H1 (cell line): ENCODE measurements at regions of chr6 and their contacts with region 1.

Region 1: GRCh38 chr6:131949909-131950766 is 1.0 kb downstream of the CCN2 start:
- DNase-seq: peak in 1 of 2 experiments; percentile 81
- H3K4me3 ChIP-seq: peak overlapping the region; percentile 72 to 98 (median 90)
- H3K27ac ChIP-seq: peak overlapping the region; percentile 84; the same call in 1 of the 2 replicates
- H3K4me1 ChIP-seq: peaks cover 15 to 33% (median 21%) of the 10 kb centered on the region in 4 experiments
- H3K27me3 ChIP-seq: no peaks in the 10 kb centered on the region
- CTCF ChIP-seq: peak; percentile 68 to 80 (median 71)
- EP300 ChIP-seq: no peak
- POLR2A ChIP-seq: peak; percentile 17 to 62
- RAD21 ChIP-seq: peak; percentile 56 to 58

Region 2: GRCh38 chr6:130259557-130259956 is 1690.6 kb before region 1 on chr6:
- CTCF ChIA-PET with region 1: no interaction called
- POLR2A ChIA-PET with region 1: no interaction called
- DNase-seq: no peak
- H3K4me3 ChIP-seq: no peak overlapping the region
- H3K27ac ChIP-seq: no peak overlapping the region
- H3K4me1 ChIP-seq: no peaks in the 10 kb centered on the region
- H3K27me3 ChIP-seq: no peaks in the 10 kb centered on the region
- CTCF ChIP-seq: no peak
- EP300 ChIP-seq: no peak
- POLR2A ChIP-seq: no peak
- RAD21 ChIP-seq: no peak

Region 3: GRCh38 chr6:131914967-131915751 is 35.0 kb before region 1 on chr6:
- CTCF ChIA-PET with region 1: interaction called, 3 read pairs
- POLR2A ChIA-PET with region 1: interaction called, 12 read pairs
- DNase-seq: no peak
- H3K4me3 ChIP-seq: no peak overlapping the region
- H3K27ac ChIP-seq: no peak overlapping the region
- H3K4me1 ChIP-seq: no peaks in the 10 kb centered on the region
- H3K27me3 ChIP-seq: no peaks in the 10 kb centered on the region
- CTCF ChIP-seq: peak in 2 of 3 experiments; percentile 48 to 71; a peak in 3 of 4 replicates
- EP300 ChIP-seq: no peak
- POLR2A ChIP-seq: peak; percentile 19 to 84; a peak in 2 of 3 replicates
- RAD21 ChIP-seq: peak; percentile 49 to 64

Region 4: DNA sequence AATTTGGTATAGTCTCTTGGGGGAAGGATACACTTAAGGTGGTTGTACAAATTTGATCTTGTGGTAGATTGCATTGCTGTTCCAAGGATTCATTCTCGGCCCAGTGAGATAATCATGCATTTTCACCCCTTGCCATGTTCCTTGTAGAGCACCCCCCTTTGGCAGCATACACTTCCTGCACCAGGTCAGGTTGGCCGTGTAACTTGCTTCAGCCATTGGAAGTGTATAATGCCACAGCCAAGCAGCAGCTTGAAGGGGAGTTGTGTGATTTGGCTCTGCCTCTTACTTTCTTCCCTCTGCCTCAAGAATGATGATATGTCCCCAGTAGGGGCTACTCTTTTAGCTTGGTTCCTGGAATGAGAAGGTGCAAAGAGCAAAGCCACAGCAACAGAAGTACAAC is 20.9 kb before region 1 on chr6:
- CTCF ChIA-PET with region 1: interaction called, 36 read pairs
- POLR2A ChIA-PET with region 1: interaction called, 216 read pairs
- DNase-seq: no peak
- H3K4me3 ChIP-seq: no peak overlapping the region
- H3K27ac ChIP-seq: no peak overlapping the region
- H3K4me1 ChIP-seq: 0 out of 7 replicates have a peak, but pooled peaks cover 0 to 2% (median 0%) of the 10 kb centered on the region in 4 experiments
- H3K27me3 ChIP-seq: no peaks in the 10 kb centered on the region
- CTCF ChIP-seq: peak; percentile 60 to 77 (median 72)
- EP300 ChIP-seq: no peak
- POLR2A ChIP-seq: no peak
- RAD21 ChIP-seq: peak in 1 of 2 experiments; percentile 35; a peak in 2 of 4 replicates

Region 5: DNA sequence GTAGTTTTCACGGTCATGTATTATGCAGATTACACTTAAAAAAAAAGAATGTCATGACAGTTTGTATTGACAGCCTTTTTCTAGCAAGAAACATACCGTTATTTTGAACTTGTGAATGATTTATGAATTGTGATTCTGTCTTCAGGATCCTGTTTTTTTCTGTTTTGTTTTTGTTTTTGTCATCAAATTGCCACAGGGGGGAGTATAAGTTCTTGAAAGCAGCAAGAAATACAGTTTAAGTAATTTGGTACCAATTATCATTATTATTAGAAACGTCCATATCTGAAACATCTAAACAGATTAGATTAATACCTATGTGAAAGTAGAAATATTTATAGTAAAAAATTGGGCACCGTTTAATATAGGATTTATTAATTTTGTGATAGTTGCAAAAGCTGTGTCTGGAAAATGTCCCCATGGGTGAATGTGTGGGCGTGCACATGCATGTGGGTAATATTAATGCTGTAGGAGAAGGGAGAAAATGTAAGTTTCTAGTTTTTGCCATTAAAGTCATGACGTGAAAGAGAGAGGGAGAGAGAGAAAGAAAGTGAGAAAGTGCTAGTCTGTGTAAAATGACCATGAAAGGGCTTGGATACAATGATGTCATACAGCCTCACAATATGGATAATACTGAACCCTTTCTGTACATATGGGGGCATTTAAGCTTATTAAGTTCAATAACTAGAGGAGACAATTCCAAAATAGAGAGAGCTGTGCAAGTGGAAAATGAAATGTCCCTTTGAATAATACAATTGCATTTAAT is 10.4 kb after region 1 on chr6:
- CTCF ChIA-PET with region 1: interaction called, 5 read pairs
- POLR2A ChIA-PET with region 1: interaction called, 70 read pairs
- DNase-seq: no peak
- H3K4me3 ChIP-seq: no peak overlapping the region
- H3K27ac ChIP-seq: no peak overlapping the region
- H3K4me1 ChIP-seq: peaks cover 0 to under 1% (median under 1%) of the 10 kb centered on the region in 4 experiments; a peak in 4 of 7 replicates
- H3K27me3 ChIP-seq: no peaks in the 10 kb centered on the region
- CTCF ChIP-seq: no peak
- EP300 ChIP-seq: no peak
- POLR2A ChIP-seq: no peak
- RAD21 ChIP-seq: peak in 1 of 2 experiments; percentile 25; a peak in 2 of 4 replicates

Region 6: DNA sequence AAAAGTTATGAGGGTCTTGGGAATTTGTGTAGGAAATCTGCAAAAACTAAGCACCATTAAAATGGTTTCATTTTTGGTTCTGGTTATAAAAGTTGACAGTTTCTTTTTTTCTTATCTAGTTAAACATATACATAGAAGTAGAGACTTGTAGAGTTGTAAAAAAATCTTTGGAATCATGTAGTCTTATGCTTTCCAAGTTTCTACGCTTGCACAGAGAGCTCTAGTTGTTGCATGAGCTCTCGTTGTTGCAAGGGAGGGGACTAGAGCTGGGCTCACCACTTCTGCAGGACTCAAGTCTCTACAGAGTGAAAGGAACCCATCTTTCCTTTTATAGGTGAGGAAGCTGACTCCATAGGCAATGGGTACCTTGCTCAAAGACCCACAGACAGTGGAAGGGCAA is 22.6 kb after region 1 on chr6:
- CTCF ChIA-PET with region 1: no interaction called
- POLR2A ChIA-PET with region 1: interaction called, 20 read pairs
- DNase-seq: no peak
- H3K4me3 ChIP-seq: no peak overlapping the region
- H3K27ac ChIP-seq: no peak overlapping the region
- H3K4me1 ChIP-seq: no peaks in the 10 kb centered on the region
- H3K27me3 ChIP-seq: peaks cover 0 to 1% (median 0%) of the 10 kb centered on the region in 4 experiments; a peak in 1 of 7 replicates
- CTCF ChIP-seq: no peak
- EP300 ChIP-seq: no peak
- POLR2A ChIP-seq: no peak
- RAD21 ChIP-seq: no peak

Region 7: DNA sequence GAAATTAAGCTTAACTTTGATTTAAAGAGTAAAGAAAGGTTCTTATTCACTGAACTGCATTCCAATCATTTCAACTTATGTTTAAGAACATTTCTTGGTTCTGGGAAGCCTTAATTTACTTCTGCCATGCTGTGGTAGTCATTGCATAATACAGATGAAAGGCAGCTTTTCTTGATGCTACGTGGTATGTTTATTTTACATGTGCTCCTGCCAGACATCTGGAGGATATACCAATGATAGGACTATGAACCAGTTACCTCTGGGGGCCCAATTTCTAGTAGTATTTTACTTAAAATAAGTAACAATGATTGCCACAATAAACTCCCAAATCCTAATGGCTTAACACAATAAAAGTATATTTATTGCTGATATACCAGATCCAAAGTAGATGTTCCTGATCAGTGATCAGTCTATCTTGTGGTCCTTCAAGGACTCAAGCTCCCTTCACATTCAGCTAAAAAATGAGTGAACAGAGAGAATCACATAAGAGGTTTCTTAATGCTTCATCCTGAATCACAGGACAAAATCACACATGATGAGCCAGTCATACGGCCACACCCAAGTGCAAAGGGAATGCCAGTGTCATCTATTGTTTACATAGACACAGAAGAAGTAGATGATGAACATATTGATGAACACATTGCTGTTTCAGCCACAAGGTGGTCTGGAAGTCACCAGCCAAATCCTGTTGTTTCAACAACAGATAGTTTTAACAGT is 57.5 kb after region 1 on chr6:
- CTCF ChIA-PET with region 1: interaction called, 3 read pairs
- POLR2A ChIA-PET with region 1: interaction called, 11 read pairs
- DNase-seq: no peak
- H3K4me3 ChIP-seq: no peak overlapping the region
- H3K27ac ChIP-seq: no peak overlapping the region
- H3K4me1 ChIP-seq: peaks cover 0 to 6% (median 0%) of the 10 kb centered on the region in 4 experiments; a peak in 1 of 7 replicates
- H3K27me3 ChIP-seq: peaks cover 0 to 1% (median 0%) of the 10 kb centered on the region in 4 experiments; a peak in 1 of 7 replicates
- CTCF ChIP-seq: no peak
- EP300 ChIP-seq: no peak
- POLR2A ChIP-seq: no peak
- RAD21 ChIP-seq: no peak

Region 8: GRCh38 chr6:132084833-132085509 is 134.8 kb after region 1 on chr6:
- CTCF ChIA-PET with region 1: no interaction called
- POLR2A ChIA-PET with region 1: interaction called, 17 read pairs
- DNase-seq: no peak
- H3K4me3 ChIP-seq: no peak overlapping the region
- H3K27ac ChIP-seq: no peak overlapping the region
- H3K4me1 ChIP-seq: peaks cover 0 to 10% (median 1%) of the 10 kb centered on the region in 4 experiments; a peak in 4 of 7 replicates
- H3K27me3 ChIP-seq: no peaks in the 10 kb centered on the region
- CTCF ChIP-seq: no peak
- EP300 ChIP-seq: no peak
- POLR2A ChIP-seq: no peak
- RAD21 ChIP-seq: no peak